ENCODE measurements at regions of chr5 and their contacts with region 1.

Region 1: DNA sequence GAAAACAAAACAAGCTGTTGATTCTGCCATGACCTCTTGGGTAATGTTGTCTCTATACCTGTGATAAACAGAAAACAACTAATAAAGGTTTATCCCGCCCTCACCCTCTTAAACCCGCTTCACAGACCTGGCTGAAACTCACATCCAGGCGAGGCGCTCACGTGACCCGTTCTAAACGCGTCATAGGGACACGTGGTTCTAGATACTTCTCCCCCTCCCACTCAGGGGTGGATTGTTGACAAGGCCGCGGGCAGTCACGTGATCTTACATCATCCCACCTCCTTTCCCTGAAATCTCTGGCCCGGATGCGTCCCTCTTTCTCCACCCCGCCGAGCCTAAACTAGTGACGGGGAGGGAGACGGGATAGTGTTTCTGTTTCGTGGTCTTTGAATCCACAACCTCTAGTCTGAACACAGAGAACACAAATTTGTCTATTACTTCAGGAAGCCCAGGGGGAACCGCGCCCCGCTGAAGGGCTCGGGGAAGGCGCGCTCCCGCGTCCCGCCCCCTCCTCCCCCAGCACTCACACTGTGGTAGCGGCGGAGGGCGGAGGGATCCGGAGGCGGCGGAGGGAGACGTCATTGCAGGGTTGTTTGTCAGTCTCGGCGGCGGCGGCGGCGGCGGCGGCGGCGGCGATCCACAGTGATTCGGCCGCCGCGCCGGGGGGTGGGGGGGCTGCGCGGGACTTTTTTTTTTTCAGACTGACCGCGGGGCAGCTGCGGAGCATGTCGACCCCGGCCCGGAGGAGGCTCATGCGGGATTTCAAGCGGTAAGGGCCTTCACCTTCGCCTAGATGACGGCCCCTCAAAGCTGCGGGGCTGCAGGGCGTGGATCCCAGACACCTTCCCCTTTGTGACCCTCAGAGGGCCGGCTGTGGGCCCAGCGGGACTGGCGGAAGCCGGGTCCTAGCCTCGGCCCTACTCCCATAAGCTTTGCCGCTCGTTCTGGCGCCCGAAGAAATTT is at the start of gene UBE2B:
- DNase-seq: peak; percentile 93
- H3K4me3 ChIP-seq: peak within 1 kb of the TSS; percentile 99
- H3K27ac ChIP-seq: peak within 1 kb of the TSS; percentile 97
- H3K4me1 ChIP-seq: peaks cover 22% of the 10 kb centered on the region
- H3K27me3 ChIP-seq: no peaks in the 10 kb centered on the region
- CTCF ChIP-seq: no peak
- total RNA-seq, gene UBE2B: 61.9 and 85.5 TPM in 2 replicates

Region 2: DNA sequence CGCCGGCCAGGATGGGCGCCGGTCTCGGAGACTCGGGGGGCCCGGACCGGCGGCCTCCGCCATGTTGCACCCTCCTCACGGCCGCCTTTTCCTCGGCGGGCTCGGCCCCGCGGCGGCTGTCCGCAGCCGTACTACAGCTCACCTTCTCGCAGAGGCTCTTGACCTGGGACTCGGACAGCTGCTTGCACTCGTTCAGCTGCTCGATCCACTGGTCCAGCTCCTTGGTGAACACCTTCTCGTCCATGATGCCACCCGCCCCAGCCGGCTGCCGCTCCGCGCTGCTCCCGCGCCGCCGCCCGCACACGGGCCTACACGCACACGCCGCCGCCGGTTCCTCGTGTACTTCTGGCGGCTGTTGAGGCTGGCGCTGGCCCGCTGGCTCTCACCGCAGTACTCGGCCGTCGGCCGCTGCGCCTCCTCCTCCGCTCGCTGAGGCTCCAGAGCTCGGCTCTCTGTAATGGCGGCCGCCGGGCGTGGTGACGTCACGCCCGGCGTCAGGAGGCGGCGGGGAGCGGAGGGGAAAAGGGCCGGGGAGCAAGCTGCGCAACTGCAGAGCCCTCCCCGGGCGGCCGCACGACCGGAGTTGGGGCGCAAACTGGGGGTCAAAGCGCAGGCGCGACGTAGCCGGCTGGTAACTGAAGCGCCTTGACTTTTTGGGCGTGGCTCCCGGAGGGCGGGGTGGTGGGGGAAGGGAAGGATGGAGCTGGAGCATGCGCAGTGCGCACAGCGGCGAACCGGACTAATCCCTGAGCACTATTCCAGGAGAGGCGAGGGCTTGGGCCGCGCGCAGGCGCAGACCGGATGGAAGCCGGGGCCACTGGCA is 145.3 kb before region 1 on chr5 and contains the start of gene PPP2CA:
- CTCF ChIA-PET with region 1: no interaction called
- POLR2A ChIA-PET with region 1: interaction called, 4 read pairs
- intact Hi-C with region 1: loop called (anchors 5 kb)
- DNase-seq: peak; percentile 92 to 100
- H3K4me3 ChIP-seq: peak within 1 kb of the TSS; percentile 79
- H3K27ac ChIP-seq: peak within 1 kb of the TSS; percentile 95
- H3K4me1 ChIP-seq: peaks cover 36% of the 10 kb centered on the region
- H3K27me3 ChIP-seq: no peaks in the 10 kb centered on the region
- CTCF ChIP-seq: peak; percentile 38; the same call in 1 of the 2 replicates
- total RNA-seq, gene PPP2CA: 146 and 149 TPM in 2 replicates

Region 3: DNA sequence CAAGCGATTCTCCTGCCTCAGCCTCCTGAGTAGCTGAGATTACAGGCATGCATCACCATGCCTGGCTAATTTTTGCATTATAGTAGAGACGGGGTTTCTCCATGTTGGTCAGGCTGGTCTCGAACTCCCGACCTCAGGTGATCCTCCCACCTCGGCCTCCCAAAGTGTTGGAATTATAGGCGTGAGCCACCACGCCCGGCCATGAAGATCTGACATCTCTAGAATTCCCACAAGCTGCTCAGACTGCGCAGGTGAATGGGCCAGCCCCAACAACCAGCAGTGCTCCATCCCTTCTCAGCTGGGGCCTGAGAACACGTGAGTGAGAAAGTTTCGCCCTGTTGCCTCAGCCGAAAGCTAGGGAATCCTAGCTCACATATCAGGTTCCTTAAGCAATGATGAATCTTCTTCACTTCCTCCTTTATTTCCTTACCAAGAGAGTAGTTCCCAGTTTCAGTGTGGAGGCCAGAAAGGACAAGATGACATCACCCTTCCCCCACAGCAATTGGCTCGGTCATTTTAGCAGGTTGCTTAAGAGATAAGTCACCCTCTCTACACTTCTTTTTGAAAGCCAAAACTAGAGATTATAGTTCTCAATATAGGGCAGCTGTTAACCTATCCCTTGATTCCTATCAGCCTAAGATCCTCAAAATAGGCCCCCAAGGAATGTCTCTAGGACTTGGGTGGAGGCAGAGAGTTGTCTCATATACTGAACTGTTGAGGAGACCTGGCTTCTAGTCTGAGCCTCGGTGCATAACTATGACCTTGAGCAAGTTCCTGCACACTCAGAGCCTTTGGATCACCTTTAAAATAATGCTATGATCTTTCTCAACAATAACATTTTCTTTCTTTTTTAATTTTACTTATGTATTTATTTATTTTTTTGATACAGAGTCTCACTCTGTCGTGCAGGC is 121.4 kb before region 1 on chr5:
- CTCF ChIA-PET with region 1: no interaction called
- POLR2A ChIA-PET with region 1: no interaction called
- intact Hi-C with region 1: no loop called
- DNase-seq: peak; percentile 19 to 83
- H3K4me3 ChIP-seq: no peak overlapping the region
- H3K27ac ChIP-seq: peak overlapping the region; percentile 94
- H3K4me1 ChIP-seq: peaks cover 71% of the 10 kb centered on the region
- H3K27me3 ChIP-seq: no peaks in the 10 kb centered on the region
- CTCF ChIP-seq: no peak

Region 4: GRCh38 chr5:134436523-134437339 is 65.6 kb after region 1 on chr5:
- CTCF ChIA-PET with region 1: no interaction called
- POLR2A ChIA-PET with region 1: no interaction called
- intact Hi-C with region 1: loop called (anchors 1 kb)
- DNase-seq: peak; percentile 84 to 91
- H3K4me3 ChIP-seq: peak overlapping the region; percentile 47; the same call in 1 of the 2 replicates
- H3K27ac ChIP-seq: peak overlapping the region; percentile 80
- H3K4me1 ChIP-seq: peaks cover 61% of the 10 kb centered on the region
- H3K27me3 ChIP-seq: no peaks in the 10 kb centered on the region
- CTCF ChIP-seq: no peak

Region 5: GRCh38 chr5:134446938-134447337 is 75.8 kb after region 1 on chr5:
- CTCF ChIA-PET with region 1: no interaction called
- POLR2A ChIA-PET with region 1: no interaction called
- intact Hi-C with region 1: no loop called
- DNase-seq: no peak
- H3K4me3 ChIP-seq: no peak overlapping the region
- H3K27ac ChIP-seq: no peak overlapping the region
- H3K4me1 ChIP-seq: peaks cover 7% of the 10 kb centered on the region
- H3K27me3 ChIP-seq: no peaks in the 10 kb centered on the region
- CTCF ChIP-seq: no peak

Region 6: DNA sequence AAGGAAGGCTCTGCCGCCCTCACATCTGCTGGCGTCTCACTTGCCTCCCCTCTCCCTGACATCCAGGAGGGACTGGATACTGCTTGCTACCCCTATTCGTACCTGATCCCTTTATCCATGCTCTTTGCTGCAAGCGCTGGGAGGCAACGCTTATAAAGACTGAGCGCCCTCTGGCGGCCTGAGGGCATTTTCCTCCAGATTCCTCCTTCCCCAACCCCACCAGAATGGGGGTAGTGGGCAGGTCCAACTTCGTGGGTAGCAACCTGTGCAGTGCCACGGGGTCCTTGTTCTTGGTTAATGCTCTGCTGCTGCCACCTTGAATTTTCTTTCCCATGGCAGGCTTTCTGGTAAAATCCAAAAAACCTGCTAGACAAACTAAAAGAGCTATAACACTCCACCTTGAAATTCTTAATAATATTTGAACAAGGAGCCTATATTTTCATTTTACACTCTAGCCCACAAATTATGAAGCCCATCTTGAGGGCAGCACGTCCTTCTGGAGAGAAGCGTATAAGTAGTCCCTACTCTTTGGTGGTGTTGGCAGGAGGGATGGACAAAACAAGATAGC is 206.7 kb after region 1 on chr5:
- CTCF ChIA-PET with region 1: interaction called, 3 read pairs
- POLR2A ChIA-PET with region 1: no interaction called
- intact Hi-C with region 1: loop called (anchors 5 kb)
- DNase-seq: peak in 1 of 2 experiments; percentile 69
- H3K4me3 ChIP-seq: no peak overlapping the region
- H3K27ac ChIP-seq: no peak overlapping the region
- H3K4me1 ChIP-seq: no peaks in the 10 kb centered on the region
- H3K27me3 ChIP-seq: no peaks in the 10 kb centered on the region
- CTCF ChIP-seq: peak; percentile 84

Measured in PC-9 (cell line).